ENCODE measurements at regions of chr5 and their contacts with region 1.

Region 1: DNA sequence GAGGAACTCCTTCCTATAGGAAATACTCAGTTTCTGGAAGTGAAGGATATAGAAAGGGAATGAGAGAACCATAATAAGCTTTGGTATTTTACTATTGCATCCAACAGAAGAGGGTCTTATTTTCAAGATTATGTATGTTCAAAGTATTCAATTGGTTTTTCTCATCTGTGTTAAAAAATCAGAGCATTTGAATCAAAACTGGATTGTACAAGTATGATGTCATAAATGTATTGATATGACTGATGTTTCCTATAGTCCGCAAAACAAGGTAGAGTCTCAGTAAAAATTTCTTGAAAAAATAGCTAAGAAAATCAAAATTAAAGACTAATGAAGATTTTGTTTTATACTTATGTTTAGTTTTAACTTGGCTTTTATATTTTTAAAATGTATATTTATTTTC is 321.7 kb upstream of the FAM174A start:
- DNase-seq: no peak
- H3K4me3 ChIP-seq: no peak overlapping the region
- H3K27ac ChIP-seq: no peak overlapping the region
- H3K4me1 ChIP-seq: no peaks in the 10 kb centered on the region
- H3K27me3 ChIP-seq: no peaks in the 10 kb centered on the region
- CTCF ChIP-seq: no peak
- EP300 ChIP-seq: no peak
- POLR2A ChIP-seq: no peak

Region 2: DNA sequence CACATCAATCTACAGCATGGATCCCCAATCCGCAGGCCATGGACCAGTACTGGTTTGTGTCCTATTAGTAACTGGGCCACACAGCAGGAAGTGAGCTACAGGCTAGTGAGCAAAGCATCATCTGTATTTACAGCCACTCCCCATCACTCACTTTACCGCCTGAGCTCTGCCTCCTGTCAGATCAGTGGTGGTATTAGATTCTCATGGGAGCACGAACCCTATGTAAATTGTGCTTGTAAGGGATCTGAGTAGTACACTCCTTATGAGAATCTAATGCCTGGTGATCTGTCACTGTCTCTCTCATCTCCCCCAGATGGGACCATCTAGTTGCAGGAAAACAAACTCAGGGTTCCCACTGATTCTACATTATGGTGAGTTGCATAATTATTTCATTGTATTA is 109.0 kb after region 1 on chr5:
- in situ Hi-C with region 1: no loop called
- intact Hi-C with region 1: loop called (anchors 5 kb)
- DNase-seq: no peak
- H3K4me3 ChIP-seq: no peak overlapping the region
- H3K27ac ChIP-seq: no peak overlapping the region
- H3K4me1 ChIP-seq: no peaks in the 10 kb centered on the region
- H3K27me3 ChIP-seq: no peaks in the 10 kb centered on the region
- CTCF ChIP-seq: no peak
- EP300 ChIP-seq: no peak
- POLR2A ChIP-seq: no peak

Region 3: GRCh38 chr5:100600298-100600994 is 387.0 kb after region 1 on chr5:
- in situ Hi-C with region 1: no loop called
- intact Hi-C with region 1: no loop called
- DNase-seq: no peak
- H3K4me3 ChIP-seq: no peak overlapping the region
- H3K27ac ChIP-seq: no peak overlapping the region
- H3K4me1 ChIP-seq: no peaks in the 10 kb centered on the region
- H3K27me3 ChIP-seq: no peaks in the 10 kb centered on the region
- CTCF ChIP-seq: no peak
- EP300 ChIP-seq: no peak
- POLR2A ChIP-seq: no peak

Measured in transverse colon (tissue), 4 donors.